ENCODE measurements at regions of chr3 and their contacts with region 1.

Region 1: GRCh38 chr3:142447852-142448823 is at the start of gene XRN1:
- DNase-seq: peak; percentile 99
- H3K4me3 Mint-ChIP-seq: peak within 1 kb of the TSS; percentile 100
- H3K27ac Mint-ChIP-seq: peak within 1 kb of the TSS; percentile 99
- H3K4me1 Mint-ChIP-seq: peaks cover 25% of the 10 kb centered on the region
- H3K27me3 Mint-ChIP-seq: no peaks in the 10 kb centered on the region
- total RNA-seq, gene XRN1: 43.8 and 49.5 TPM in 2 replicates

Region 2: DNA sequence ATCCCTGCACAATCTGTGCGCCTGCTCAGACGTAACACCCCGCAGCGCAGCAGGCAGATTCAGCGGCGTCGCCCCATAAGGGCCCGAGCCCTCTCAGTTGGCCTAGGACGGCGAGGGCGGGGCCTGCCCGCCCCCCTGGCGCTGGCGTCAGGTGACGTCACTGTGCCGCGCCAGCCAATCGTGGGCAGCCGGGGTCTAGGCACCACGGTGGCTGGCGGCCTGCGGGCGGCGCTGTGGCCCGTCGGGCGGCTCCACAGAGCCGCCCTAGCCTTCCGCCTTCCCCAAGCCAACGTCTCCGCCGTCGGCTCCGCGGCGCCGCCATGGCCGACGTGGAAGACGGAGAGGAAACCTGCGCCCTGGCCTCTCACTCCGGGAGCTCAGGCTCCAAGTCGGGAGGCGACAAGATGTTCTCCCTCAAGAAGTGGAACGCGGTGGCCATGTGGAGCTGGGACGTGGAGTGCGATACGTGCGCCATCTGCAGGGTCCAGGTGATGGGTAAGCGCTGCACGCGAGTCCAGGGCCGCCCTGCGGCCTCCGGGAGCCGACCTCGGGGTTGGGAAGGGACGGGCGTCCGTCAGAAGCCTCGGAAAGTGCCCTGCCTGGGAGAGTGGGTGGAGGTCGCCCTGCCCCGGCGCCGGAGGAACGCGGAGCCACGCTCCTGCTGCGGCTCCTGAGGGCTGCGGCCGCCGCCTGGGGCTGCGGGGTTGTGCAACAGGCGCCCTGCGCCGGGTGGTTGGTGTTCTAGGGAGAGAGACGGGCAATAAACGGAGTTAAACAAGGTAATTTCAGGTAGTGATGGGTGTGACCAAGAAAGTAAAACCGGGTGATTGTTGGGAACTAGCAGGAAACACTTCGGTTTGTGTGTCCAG is 709.9 kb before region 1 on chr3 and contains the start of gene RNF7:
- intact Hi-C with region 1: loop called (anchors 2 kb)
- DNase-seq: peak; percentile 99
- H3K4me3 Mint-ChIP-seq: peak within 1 kb of the TSS; percentile 92
- H3K27ac Mint-ChIP-seq: peak within 1 kb of the TSS; percentile 98
- H3K4me1 Mint-ChIP-seq: peaks cover 23% of the 10 kb centered on the region
- H3K27me3 Mint-ChIP-seq: peaks cover 3% of the 10 kb centered on the region
- total RNA-seq, gene RNF7: 67.3 and 72.5 TPM in 2 replicates

Region 3: GRCh38 chr3:142028243-142028777 is 419.8 kb before region 1 on chr3:
- intact Hi-C with region 1: loop called (anchors 10 kb)
- DNase-seq: peak; percentile 84
- H3K4me3 Mint-ChIP-seq: peak overlapping the region; percentile 87
- H3K27ac Mint-ChIP-seq: peak overlapping the region; percentile 59
- H3K4me1 Mint-ChIP-seq: peaks cover 13% of the 10 kb centered on the region
- H3K27me3 Mint-ChIP-seq: no peaks in the 10 kb centered on the region

Region 4: GRCh38 chr3:142288032-142288638 is 160.0 kb before region 1 on chr3:
- intact Hi-C with region 1: no loop called
- DNase-seq: no peak
- H3K4me3 Mint-ChIP-seq: no peak overlapping the region
- H3K27ac Mint-ChIP-seq: no peak overlapping the region
- H3K4me1 Mint-ChIP-seq: no peaks in the 10 kb centered on the region
- H3K27me3 Mint-ChIP-seq: no peaks in the 10 kb centered on the region

Region 5: GRCh38 chr3:142356818-142357217 is 91.3 kb before region 1 on chr3:
- intact Hi-C with region 1: no loop called
- DNase-seq: no peak
- H3K4me3 Mint-ChIP-seq: no peak overlapping the region
- H3K27ac Mint-ChIP-seq: no peak overlapping the region
- H3K4me1 Mint-ChIP-seq: no peaks in the 10 kb centered on the region
- H3K27me3 Mint-ChIP-seq: no peaks in the 10 kb centered on the region

Region 6: DNA sequence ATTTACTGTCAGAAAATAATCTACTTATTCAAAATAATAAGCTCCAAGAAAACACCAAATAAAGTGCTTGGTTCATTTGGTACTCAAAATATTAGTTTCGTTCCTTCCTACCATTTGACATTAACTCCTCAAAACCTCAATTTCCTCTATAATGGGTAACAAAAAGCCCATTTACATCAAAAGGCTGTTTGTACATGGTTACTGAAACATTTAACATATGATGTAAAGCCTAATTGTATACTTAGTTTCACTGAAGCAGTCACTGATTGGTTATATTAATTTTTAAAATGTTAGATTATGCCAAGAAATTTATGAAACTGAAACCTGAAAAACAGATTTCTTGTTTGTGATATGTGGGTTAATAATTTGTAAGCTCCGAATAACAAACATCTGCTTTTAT is 15.0 kb before region 1 on chr3:
- intact Hi-C with region 1: no loop called
- DNase-seq: no peak
- H3K4me3 Mint-ChIP-seq: no peak overlapping the region
- H3K27ac Mint-ChIP-seq: no peak overlapping the region
- H3K4me1 Mint-ChIP-seq: peaks cover 23% of the 10 kb centered on the region
- H3K27me3 Mint-ChIP-seq: no peaks in the 10 kb centered on the region

Region 7: DNA sequence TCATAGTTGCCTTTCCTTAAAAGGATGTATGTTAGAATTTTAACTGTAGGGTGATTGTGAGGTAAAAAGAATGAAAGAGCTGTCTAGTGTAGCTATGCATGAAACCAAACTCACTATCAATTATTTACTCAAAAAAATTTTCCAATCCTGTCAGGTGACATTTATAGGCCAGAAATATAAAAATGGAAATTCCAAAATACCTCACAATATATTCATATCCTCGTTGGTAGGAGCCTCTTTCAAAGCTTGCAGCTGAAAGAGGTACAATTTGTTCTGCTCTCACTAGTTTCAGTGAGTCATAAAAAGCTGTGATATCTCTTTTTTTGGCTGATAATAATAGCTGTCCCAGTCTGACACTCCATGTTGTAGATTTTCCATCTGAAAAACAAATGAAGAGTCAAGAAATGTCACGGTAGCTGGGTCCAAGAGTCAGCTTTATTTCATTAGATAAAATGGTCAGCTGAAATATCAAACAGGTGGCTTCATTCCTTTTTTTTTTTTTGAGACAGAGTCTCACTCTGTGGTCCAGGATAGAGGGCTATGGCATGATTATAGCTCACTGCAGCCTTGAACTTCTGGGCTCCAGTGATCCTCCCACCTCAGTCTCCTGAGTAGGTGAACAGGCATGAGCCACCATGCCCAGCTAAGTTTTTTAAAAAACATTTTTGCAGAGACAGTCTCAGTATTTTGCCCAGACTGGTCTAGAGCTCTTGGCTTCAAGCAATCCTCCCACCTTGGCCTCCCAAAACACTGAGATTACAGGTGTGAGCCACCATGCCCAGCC is 50.5 kb after region 1 on chr3:
- intact Hi-C with region 1: loop called (anchors 2 kb)
- DNase-seq: no peak
- H3K4me3 Mint-ChIP-seq: no peak overlapping the region
- H3K27ac Mint-ChIP-seq: peak overlapping the region; percentile 53
- H3K4me1 Mint-ChIP-seq: peaks cover 9% of the 10 kb centered on the region
- H3K27me3 Mint-ChIP-seq: no peaks in the 10 kb centered on the region

Region 8: GRCh38 chr3:142578327-142579223 is 130.4 kb after region 1 on chr3 and contains the start of gene ATR:
- intact Hi-C with region 1: loop called (anchors 1 kb)
- DNase-seq: peak; percentile 99
- H3K4me3 Mint-ChIP-seq: peak within 1 kb of the TSS; percentile 99
- H3K27ac Mint-ChIP-seq: peak within 1 kb of the TSS; percentile 99
- H3K4me1 Mint-ChIP-seq: peaks cover 42% of the 10 kb centered on the region
- H3K27me3 Mint-ChIP-seq: peaks cover 15% of the 10 kb centered on the region
- total RNA-seq, gene ATR: 34.2 and 35.0 TPM in 2 replicates

Region 9: GRCh38 chr3:142904639-142905436 is 456.7 kb after region 1 on chr3:
- intact Hi-C with region 1: no loop called
- DNase-seq: no peak
- H3K4me3 Mint-ChIP-seq: no peak overlapping the region
- H3K27ac Mint-ChIP-seq: no peak overlapping the region
- H3K4me1 Mint-ChIP-seq: peaks cover 4% of the 10 kb centered on the region
- H3K27me3 Mint-ChIP-seq: peaks cover 30% of the 10 kb centered on the region

Region 10: GRCh38 chr3:143001369-143002082 is 553.4 kb after region 1 on chr3 and contains the start of gene U2SURP:
- intact Hi-C with region 1: loop called (anchors 1 kb)
- DNase-seq: peak; percentile 97
- H3K4me3 Mint-ChIP-seq: peak within 1 kb of the TSS; percentile 96
- H3K27ac Mint-ChIP-seq: peak within 1 kb of the TSS; percentile 97
- H3K4me1 Mint-ChIP-seq: peaks cover 24% of the 10 kb centered on the region
- H3K27me3 Mint-ChIP-seq: peaks cover 8% of the 10 kb centered on the region
- total RNA-seq, gene U2SURP: 189 and 212 TPM in 2 replicates

Measured in activated CD4-positive, alpha-beta T cell treated with anti-CD3 and anti-CD28 coated beads, Interleukin-2, amount 10 ng/mL, durations not matched to agents 24 days and 14 days (primary cell).